ENCODE measurements at regions of chr14 and their contacts with region 1.

Region 1: DNA sequence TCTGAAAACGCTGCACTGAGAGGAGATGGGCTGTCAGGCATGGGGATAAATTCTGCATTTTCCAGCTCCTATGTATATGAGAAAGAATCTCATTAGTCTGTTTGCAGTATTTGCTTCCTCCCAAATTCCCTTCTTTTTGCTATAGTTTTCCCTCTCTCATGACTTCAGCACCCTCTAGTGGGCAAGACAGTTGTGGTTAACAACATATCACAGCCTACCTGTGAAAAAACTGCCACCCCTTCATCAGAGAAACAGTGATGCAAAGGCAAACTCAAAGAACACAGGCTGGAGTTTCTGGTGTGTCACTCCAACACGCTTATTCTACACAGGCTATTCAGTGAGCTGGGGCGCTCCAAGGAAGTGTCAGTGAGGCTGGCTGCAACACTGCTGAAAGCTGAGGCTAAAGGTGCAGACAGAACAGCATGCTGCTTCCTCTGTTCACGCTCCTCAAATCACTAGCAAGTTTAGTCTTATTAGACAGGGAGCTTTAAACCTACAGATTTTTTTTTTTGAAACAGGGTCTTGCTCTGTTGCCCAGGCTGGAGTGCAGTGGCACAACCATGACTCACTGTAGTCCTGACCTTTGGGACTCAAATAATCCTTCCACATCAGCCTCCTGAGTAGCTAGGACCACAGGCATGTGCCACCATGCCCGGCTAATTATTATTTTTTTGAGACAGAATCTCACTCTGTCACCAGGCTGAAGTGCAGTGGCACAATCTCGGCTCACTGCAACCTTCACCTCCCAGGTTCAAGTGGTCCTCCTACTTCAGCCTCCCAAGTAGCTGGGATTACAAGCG is 19.3 kb downstream of the ZC2HC1C start:
- DNase-seq: peak; percentile 67
- H3K4me3 Mint-ChIP-seq: no peak overlapping the region
- H3K27ac Mint-ChIP-seq: no peak overlapping the region
- H3K4me1 Mint-ChIP-seq: no peaks in the 10 kb centered on the region
- H3K27me3 Mint-ChIP-seq: no peaks in the 10 kb centered on the region

Region 2: DNA sequence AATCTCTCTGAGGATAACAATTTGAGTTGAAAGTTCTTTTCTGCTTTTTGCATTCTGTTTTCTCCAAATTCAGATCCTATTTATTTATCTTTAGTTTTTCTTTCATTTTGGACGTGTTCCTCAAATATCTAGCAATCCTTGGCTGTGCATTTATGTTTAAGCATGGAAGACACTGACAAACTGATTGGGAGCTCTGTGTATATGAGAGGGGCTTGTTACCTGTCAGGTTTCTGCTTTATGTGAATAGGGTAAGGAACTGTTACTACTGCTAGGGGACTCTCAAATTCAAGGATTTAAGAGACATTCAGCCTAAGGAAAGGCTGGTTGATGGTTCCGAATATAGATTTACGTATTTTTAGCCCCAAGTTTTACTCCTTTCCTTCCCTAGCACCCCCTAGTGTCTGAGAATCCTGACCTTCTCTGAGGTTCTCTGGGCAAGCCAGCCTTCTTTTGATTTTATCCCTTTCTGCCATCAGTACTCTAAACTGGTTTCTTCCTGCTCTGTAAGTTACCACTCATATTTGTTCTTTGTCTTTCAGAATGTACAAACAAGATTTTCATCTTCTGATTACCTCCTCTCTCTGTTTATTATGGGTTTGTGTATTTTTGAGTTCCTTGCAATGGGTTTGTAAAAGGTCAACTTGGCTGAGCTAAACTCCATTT is 295.1 kb before region 1 on chr14:
- CTCF ChIA-PET with region 1: no interaction called
- DNase-seq: peak; percentile 30
- H3K4me3 Mint-ChIP-seq: peak overlapping the region; percentile 67
- H3K27ac Mint-ChIP-seq: peak overlapping the region; percentile 91
- H3K4me1 Mint-ChIP-seq: peaks cover 41% of the 10 kb centered on the region
- H3K27me3 Mint-ChIP-seq: no peaks in the 10 kb centered on the region

Region 3: GRCh38 chr14:74945823-74946682 is 142.7 kb before region 1 on chr14:
- CTCF ChIA-PET with region 1: interaction called, 88 read pairs
- DNase-seq: peak; percentile 85
- H3K4me3 Mint-ChIP-seq: no peak overlapping the region
- H3K27ac Mint-ChIP-seq: peak overlapping the region; percentile 42
- H3K4me1 Mint-ChIP-seq: peaks cover 32% of the 10 kb centered on the region
- H3K27me3 Mint-ChIP-seq: peaks cover 33% of the 10 kb centered on the region

Region 4: DNA sequence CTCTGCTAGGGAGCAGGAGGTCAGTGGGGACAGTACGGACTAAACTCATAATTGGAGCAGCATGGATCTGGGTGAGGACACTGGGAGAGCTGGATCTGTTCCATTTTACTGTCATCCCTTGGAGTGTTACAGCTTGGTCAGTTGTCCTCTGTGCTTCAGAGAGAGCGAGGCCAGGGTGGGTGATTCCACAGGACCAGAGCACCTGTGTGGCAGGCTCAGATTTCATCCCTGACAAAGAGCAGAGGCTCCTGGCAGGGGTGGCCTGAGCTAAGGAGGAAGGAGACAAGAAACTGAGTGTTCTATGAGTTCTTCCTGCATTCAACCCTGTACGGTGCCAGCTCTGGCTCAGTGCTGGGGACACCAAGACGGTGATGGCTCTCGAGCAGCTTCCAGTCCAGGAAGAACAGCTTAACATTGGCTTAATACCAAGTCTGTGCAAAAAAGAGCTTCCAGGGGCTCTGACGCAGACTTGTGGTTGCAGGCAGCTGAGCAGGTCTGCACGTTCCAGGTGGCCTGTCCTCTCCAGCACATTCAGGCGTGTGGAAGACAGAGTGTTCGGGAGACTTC is 125.0 kb before region 1 on chr14:
- CTCF ChIA-PET with region 1: interaction called, 11 read pairs
- DNase-seq: no peak
- H3K4me3 Mint-ChIP-seq: no peak overlapping the region
- H3K27ac Mint-ChIP-seq: no peak overlapping the region
- H3K4me1 Mint-ChIP-seq: peaks cover 3% of the 10 kb centered on the region
- H3K27me3 Mint-ChIP-seq: peaks cover 54% of the 10 kb centered on the region

Region 5: DNA sequence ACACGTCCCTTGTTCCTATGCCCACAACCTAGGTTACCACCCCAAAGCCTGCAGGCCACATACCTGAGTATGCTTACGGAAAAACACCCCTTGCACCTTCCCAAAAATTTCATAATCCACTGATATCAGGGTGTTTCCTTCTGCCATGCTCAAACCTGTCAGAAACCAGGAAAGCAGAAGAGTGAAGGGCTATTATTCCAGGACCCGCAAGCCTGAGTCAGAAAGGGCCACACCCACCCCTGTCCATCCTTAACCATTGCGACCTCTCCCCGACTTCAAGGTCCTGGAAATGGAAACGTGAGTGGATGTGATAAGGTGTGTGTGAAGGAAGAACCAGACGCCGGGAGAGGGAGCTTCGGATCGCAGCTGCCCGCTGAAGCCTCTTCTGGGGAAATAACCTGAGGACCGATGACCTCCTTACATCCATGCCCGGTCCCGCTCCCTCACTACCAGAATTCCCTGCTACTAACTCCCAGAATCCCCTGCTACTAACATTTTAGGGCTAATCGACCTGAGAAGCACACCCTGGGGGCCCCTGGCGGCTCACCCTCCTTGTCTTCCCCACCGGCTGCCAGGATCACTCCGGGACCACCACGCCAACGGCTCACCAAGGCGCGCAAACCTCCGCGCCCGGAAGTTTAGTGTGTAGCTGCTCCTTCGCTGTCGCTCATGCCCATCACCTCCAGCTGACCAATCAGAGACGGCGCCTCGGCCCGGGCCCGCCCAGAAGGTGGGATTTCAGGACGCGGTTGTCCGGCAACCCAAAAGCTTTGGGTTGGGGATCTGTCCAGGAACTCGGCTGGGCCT is 25.2 kb before region 1 on chr14 and contains the start of gene ACYP1:
- CTCF ChIA-PET with region 1: interaction called, 13 read pairs
- DNase-seq: peak; percentile 94
- H3K4me3 Mint-ChIP-seq: peak within 1 kb of the TSS; percentile 99
- H3K27ac Mint-ChIP-seq: peak within 1 kb of the TSS; percentile 94
- H3K4me1 Mint-ChIP-seq: peaks cover 48% of the 10 kb centered on the region
- H3K27me3 Mint-ChIP-seq: no peaks in the 10 kb centered on the region

Region 6: DNA sequence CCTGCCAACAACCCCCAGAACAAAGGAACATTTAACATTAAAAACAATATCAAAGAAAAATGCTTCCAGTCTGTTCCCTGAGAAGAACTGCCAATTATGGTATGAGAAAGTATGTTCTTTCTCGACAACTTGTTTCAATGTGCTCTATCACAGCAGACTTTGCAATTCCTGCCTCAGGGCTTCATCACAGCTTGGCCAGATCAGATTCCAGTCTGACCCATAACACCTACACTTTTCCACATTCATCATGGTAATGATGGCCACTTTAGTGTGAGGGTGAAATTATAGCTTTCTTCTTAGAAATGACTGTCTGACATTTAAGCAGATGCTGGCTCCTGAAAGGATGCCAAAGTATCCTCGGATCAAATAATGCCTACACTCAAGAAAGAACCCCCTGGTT is 21.1 kb after region 1 on chr14:
- CTCF ChIA-PET with region 1: interaction called, 14 read pairs
- DNase-seq: no peak
- H3K4me3 Mint-ChIP-seq: no peak overlapping the region
- H3K27ac Mint-ChIP-seq: no peak overlapping the region
- H3K4me1 Mint-ChIP-seq: peaks cover 17% of the 10 kb centered on the region
- H3K27me3 Mint-ChIP-seq: no peaks in the 10 kb centered on the region

Region 7: GRCh38 chr14:75176142-75176820 is 87.5 kb after region 1 on chr14 and contains the start of gene TMED10:
- CTCF ChIA-PET with region 1: no interaction called
- DNase-seq: peak; percentile 94
- H3K4me3 Mint-ChIP-seq: peak within 1 kb of the TSS; percentile 89
- H3K27ac Mint-ChIP-seq: peak within 1 kb of the TSS; percentile 98
- H3K4me1 Mint-ChIP-seq: peaks cover 47% of the 10 kb centered on the region
- H3K27me3 Mint-ChIP-seq: peaks cover 14% of the 10 kb centered on the region

Region 8: DNA sequence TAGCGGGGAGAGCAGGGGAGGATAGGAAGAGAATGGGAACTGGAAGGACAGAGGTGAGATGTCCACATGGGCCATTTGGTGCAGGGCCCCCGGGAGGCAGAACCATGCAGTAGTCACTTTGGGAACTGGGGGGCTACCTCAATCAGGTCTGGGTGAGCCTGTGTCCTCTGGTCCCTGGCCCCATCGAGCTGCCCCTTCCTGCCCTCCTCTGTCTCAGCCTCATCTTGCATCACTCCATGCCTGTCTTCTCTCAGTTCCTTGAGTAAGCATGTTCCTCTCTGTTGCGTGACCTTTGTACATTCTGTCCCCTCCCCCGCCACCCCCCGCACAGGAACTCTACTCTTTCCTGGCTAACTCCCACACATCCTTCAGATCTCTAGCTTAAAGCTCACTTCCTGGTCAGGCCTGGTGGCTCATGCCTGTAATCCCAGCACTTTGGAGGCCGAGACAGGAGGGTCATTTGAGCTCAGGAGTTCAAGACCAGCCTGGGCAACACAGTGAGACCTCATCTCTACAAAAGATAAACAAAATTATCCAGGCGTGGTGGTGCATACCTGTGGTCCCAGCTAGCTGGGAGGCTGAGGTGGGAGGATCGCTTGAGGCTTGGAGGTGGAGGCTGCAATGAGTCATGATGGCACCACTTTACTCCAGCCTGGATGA is 213.0 kb after region 1 on chr14:
- CTCF ChIA-PET with region 1: interaction called, 10 read pairs
- DNase-seq: no peak
- H3K4me3 Mint-ChIP-seq: no peak overlapping the region
- H3K27ac Mint-ChIP-seq: no peak overlapping the region
- H3K4me1 Mint-ChIP-seq: peaks cover 21% of the 10 kb centered on the region
- H3K27me3 Mint-ChIP-seq: peaks cover 9% of the 10 kb centered on the region

Measured in activated naive CD4-positive, alpha-beta T cell treated with anti-CD3 and anti-CD28 coated beads, Interleukin-2, amount 10 ng/mL, durations not matched to agents 7 days and 5 days (primary cell).